B cell (primary cell): ENCODE measurements at regions of chr5 and their contacts with region 1.

Region 1: GRCh38 chr5:100777680-100778281 is 125.3 kb downstream of the ST8SIA4 start:
- DNase-seq: peak; percentile 79
- ATAC-seq: peak; percentile 62
- H3K4me3 ChIP-seq: peak overlapping the region in 2 of 5 experiments; percentile 5 to 28
- H3K4me3 Mint-ChIP-seq: peak overlapping the region; percentile 32
- H3K27ac ChIP-seq: peak overlapping the region; percentile 44 to 60
- H3K27ac Mint-ChIP-seq: peak overlapping the region; percentile 47
- H3K4me1 ChIP-seq: peaks cover 32 to 37% of the 10 kb centered on the region in 2 donors
- H3K4me1 Mint-ChIP-seq: peaks cover 52% of the 10 kb centered on the region
- H3K27me3 ChIP-seq: no peaks in the 10 kb centered on the region
- H3K27me3 Mint-ChIP-seq: no peaks in the 10 kb centered on the region
- CTCF ChIP-seq: no peak

Region 2: GRCh38 chr5:100535060-100536005 is 242.4 kb before region 1 on chr5 and contains the start of gene FAM174A:
- CTCF ChIA-PET with region 1: no interaction called
- POLR2A ChIA-PET with region 1: no interaction called
- intact Hi-C with region 1: loop called (anchors 5 kb)
- DNase-seq: peak; percentile 97
- ATAC-seq: peak; percentile 91
- H3K4me3 ChIP-seq: peak within 1 kb of the TSS; percentile 57 to 84 (median 83)
- H3K4me3 Mint-ChIP-seq: peak within 1 kb of the TSS; percentile 91
- H3K27ac ChIP-seq: peak within 1 kb of the TSS; percentile 82 to 87
- H3K27ac Mint-ChIP-seq: peak within 1 kb of the TSS; percentile 95
- H3K4me1 ChIP-seq: peaks cover 17 to 19% of the 10 kb centered on the region in 2 donors
- H3K4me1 Mint-ChIP-seq: peaks cover 19% of the 10 kb centered on the region
- H3K27me3 ChIP-seq: no peaks in the 10 kb centered on the region
- H3K27me3 Mint-ChIP-seq: peaks cover 3% of the 10 kb centered on the region
- CTCF ChIP-seq: no peak
- total RNA-seq, gene FAM174A: 6.1 TPM in 2 replicates

Region 3: GRCh38 chr5:100827481-100827889 is 49.7 kb after region 1 on chr5:
- CTCF ChIA-PET with region 1: interaction called, 3 read pairs
- POLR2A ChIA-PET with region 1: no interaction called
- intact Hi-C with region 1: loop called (anchors 5 kb)
- DNase-seq: no peak
- ATAC-seq: peak; percentile 10
- H3K4me3 ChIP-seq: no peak overlapping the region
- H3K4me3 Mint-ChIP-seq: peak overlapping the region; percentile 72
- H3K27ac ChIP-seq: peak overlapping the region; percentile 29 to 65
- H3K27ac Mint-ChIP-seq: peak overlapping the region; percentile 85
- H3K4me1 ChIP-seq: peaks cover 18 to 23% of the 10 kb centered on the region in 2 donors
- H3K4me1 Mint-ChIP-seq: peaks cover 42% of the 10 kb centered on the region
- H3K27me3 ChIP-seq: no peaks in the 10 kb centered on the region
- H3K27me3 Mint-ChIP-seq: no peaks in the 10 kb centered on the region
- CTCF ChIP-seq: no peak

Region 4: GRCh38 chr5:100840384-100840783 is 62.6 kb after region 1 on chr5:
- CTCF ChIA-PET with region 1: no interaction called
- POLR2A ChIA-PET with region 1: no interaction called
- intact Hi-C with region 1: loop called (anchors 5 kb)
- DNase-seq: peak; percentile 54
- ATAC-seq: peak; percentile 61
- H3K4me3 ChIP-seq: no peak overlapping the region
- H3K4me3 Mint-ChIP-seq: peak overlapping the region; percentile 74
- H3K27ac ChIP-seq: peak overlapping the region in 1 of 2 donors; percentile 62
- H3K27ac Mint-ChIP-seq: no peak overlapping the region
- H3K4me1 ChIP-seq: peaks cover 14 to 23% of the 10 kb centered on the region in 2 donors
- H3K4me1 Mint-ChIP-seq: peaks cover 70% of the 10 kb centered on the region
- H3K27me3 ChIP-seq: no peaks in the 10 kb centered on the region
- H3K27me3 Mint-ChIP-seq: no peaks in the 10 kb centered on the region
- CTCF ChIP-seq: no peak

Region 5: DNA sequence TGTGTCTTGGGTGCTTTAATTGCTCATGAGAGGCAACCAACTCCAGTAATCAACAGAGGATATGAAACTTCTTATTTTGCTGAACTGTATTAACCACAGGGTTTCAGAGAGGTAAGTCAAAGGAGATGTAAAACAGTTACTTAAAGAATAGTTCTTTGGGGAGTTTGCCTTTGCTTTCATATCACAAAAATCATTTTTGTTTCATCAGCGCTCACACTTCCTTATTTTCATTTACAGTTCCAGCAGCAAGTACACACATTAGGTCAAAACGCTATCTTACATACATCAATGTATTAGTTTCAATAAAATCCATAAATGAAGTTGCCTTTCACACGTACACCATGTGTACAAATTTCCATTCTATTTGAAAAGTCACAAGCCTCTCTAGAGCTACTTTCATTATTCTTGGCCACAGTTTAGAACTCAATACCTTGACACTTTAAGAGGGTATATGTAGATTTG is 75.2 kb after region 1 on chr5:
- CTCF ChIA-PET with region 1: interaction called, 3 read pairs
- POLR2A ChIA-PET with region 1: interaction called, 5 read pairs
- intact Hi-C with region 1: loop called (anchors 2 kb)
- DNase-seq: peak; percentile 82
- ATAC-seq: peak; percentile 95
- H3K4me3 ChIP-seq: peak overlapping the region in 3 of 5 experiments; percentile 3 to 49 (median 16)
- H3K4me3 Mint-ChIP-seq: peak overlapping the region; percentile 68
- H3K27ac ChIP-seq: peak overlapping the region; percentile 51 to 84
- H3K27ac Mint-ChIP-seq: peak overlapping the region; percentile 76
- H3K4me1 ChIP-seq: peaks cover 37 to 51% of the 10 kb centered on the region in 2 donors
- H3K4me1 Mint-ChIP-seq: peaks cover 41% of the 10 kb centered on the region
- H3K27me3 ChIP-seq: no peaks in the 10 kb centered on the region
- H3K27me3 Mint-ChIP-seq: no peaks in the 10 kb centered on the region
- CTCF ChIP-seq: no peak